Psoas muscle (tissue), 8 donors: ENCODE measurements at regions of chr5 and their contacts with region 1.

Region 1: GRCh38 chr5:124748687-124749594 is 2.5 kb upstream of the ZNF608 start:
- DNase-seq: peak; percentile 47 to 66
- ATAC-seq: peak; percentile 79 to 87 (median 82)
- H3K4me3 ChIP-seq: peak overlapping the region; percentile 83
- H3K27ac ChIP-seq: peak overlapping the region; percentile 95
- H3K4me1 ChIP-seq: peaks cover 8% of the 10 kb centered on the region
- H3K27me3 ChIP-seq: no peaks in the 10 kb centered on the region
- CTCF ChIP-seq: no peak

Region 2: GRCh38 chr5:124524552-124525232 is 224.2 kb before region 1 on chr5:
- intact Hi-C with region 1: loop called (anchors 10 kb)
- DNase-seq: no peak
- ATAC-seq: no peak
- H3K4me3 ChIP-seq: no peak overlapping the region
- H3K27ac ChIP-seq: no peak overlapping the region
- H3K4me1 ChIP-seq: peaks cover 15% of the 10 kb centered on the region
- H3K27me3 ChIP-seq: no peaks in the 10 kb centered on the region
- CTCF ChIP-seq: no peak

Region 3: DNA sequence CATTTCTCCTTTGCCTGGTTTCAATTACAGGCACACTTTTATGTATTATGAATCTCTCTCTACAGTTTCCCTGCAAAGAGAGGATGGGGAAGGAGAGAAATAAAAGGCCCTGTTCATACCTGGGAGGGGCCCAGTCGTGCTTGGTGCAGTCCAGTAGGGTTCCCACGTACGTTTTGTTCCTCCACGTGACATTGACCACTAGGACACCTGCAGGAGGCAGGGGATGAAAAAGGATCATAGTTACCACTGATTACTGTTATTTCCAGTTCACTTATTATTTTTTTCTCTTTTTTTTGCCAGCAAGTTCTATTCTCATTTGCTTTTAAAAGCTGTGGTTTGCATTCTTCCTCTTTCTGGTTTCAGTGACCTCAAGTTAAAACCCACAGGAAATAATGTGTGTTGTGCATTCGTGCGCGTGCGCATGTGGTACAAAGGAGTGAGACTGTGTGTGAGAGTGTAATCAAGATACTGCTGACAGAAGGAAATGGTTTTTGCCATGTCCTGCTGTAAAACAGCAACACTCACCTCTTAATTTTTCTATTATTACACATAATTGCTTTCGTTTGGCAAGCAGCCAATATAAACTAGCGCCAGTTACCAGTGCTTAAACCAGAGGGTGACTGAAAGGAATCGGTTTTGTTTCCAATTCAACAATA is 99.3 kb before region 1 on chr5:
- intact Hi-C with region 1: loop called in 1 of 2 experiments (anchors 2 kb)
- DNase-seq: peak; percentile 63 to 84
- ATAC-seq: no peak
- H3K4me3 ChIP-seq: peak overlapping the region; percentile 23
- H3K27ac ChIP-seq: peak overlapping the region; percentile 81
- H3K4me1 ChIP-seq: peaks cover 27% of the 10 kb centered on the region
- H3K27me3 ChIP-seq: no peaks in the 10 kb centered on the region
- CTCF ChIP-seq: no peak

Region 4: GRCh38 chr5:124655922-124656511 is 92.9 kb before region 1 on chr5:
- intact Hi-C with region 1: loop called (anchors 2 to 5 kb)
- DNase-seq: no peak
- ATAC-seq: peak; percentile 76 to 84 (median 77)
- H3K4me3 ChIP-seq: peak overlapping the region; percentile 50
- H3K27ac ChIP-seq: peak overlapping the region; percentile 84
- H3K4me1 ChIP-seq: peaks cover 55% of the 10 kb centered on the region
- H3K27me3 ChIP-seq: no peaks in the 10 kb centered on the region
- CTCF ChIP-seq: no peak

Region 5: DNA sequence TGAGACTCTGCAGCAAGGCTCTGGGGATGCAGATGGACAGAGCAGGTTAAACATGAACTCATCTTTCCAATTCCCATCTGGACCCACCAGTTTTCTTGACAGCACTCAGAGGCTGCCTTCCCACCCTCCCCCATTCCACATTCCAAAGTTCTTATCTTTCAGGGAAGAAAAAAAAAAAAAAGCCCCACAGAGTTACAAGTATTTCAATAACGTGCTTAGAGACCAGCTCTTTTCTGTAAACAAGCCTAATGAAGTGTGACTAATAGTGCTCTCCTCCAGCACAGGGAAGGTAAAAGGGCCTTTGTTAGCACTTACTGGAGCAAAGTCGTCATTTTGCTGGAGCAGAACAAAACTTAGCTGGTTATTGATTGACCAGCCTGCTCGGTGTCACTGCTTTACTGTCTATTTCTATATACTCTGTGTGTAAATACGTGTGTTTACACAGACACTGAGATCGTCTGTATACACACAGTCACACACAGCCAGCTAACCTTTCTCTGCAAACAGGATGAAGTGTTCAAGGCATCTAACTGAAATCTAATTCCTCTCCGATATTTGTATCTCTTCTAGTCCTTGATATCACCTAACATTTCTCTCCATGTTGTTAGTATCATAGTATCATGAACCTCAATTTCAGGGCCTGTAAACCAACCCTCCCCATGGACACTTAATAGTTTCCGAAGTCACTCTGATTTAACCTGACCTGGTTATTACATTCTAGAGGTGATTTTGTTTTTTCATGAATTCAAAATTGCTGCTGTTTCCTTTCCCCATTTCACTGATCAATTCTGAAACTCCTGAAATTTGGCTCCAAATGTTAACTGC is 87.4 kb before region 1 on chr5:
- intact Hi-C with region 1: loop called (anchors 2 to 5 kb)
- DNase-seq: no peak
- ATAC-seq: peak in 3 of 4 donors; percentile 17 to 30 (median 22)
- H3K4me3 ChIP-seq: peak overlapping the region; percentile 36
- H3K27ac ChIP-seq: peak overlapping the region; percentile 77
- H3K4me1 ChIP-seq: peaks cover 61% of the 10 kb centered on the region
- H3K27me3 ChIP-seq: no peaks in the 10 kb centered on the region
- CTCF ChIP-seq: no peak